HEK293T (cell line): ENCODE measurements at regions of chr17 and their contacts with region 1.

Region 1: DNA sequence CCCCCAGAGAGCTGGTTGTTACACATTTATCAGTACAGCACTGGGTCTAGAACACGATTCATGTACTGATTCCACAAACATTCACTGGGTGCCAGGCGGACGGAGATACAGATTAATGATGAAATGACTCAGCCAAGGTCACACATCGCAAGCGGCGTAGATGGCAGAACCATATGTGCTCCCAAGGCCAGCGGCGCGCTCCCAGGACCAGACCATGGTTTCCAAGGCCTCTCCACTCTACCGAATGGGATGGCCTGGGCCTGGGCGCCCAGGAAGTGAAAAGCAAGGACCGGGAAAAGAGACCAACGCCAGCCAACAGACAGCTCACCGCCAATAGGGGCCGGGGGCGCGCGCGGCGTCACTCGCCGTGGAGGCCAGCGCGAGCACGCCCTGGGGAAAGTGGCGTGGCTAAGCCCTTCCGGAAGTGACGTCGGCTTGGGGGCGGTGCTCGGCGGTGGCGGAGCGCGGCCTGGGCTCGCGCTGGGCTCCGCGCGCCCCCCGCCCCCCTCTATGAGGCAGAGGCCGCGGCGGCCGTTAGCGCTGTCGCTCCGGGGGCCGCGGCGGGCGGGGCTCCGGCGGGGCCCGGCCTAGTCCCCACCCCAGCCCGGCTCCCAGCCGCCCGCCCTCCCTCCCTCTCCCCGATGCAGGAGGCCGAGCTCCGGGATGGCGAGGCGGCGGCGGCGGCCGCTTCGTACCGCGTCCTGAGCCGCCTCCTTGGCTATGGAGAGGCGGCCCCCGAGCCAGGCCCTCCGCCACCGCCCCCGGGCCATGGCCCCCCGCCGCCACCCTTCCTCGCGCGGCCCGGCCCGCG is at the start of gene SOCS7:
- DNase-seq: peak; percentile 86

Region 2: GRCh38 chr17:38322091-38322779 is 29.4 kb before region 1 on chr17:
- CTCF ChIA-PET with region 1: interaction called, 11 read pairs
- POLR2A ChIA-PET with region 1: interaction called, 6 read pairs
- DNase-seq: peak; percentile 68

Region 3: DNA sequence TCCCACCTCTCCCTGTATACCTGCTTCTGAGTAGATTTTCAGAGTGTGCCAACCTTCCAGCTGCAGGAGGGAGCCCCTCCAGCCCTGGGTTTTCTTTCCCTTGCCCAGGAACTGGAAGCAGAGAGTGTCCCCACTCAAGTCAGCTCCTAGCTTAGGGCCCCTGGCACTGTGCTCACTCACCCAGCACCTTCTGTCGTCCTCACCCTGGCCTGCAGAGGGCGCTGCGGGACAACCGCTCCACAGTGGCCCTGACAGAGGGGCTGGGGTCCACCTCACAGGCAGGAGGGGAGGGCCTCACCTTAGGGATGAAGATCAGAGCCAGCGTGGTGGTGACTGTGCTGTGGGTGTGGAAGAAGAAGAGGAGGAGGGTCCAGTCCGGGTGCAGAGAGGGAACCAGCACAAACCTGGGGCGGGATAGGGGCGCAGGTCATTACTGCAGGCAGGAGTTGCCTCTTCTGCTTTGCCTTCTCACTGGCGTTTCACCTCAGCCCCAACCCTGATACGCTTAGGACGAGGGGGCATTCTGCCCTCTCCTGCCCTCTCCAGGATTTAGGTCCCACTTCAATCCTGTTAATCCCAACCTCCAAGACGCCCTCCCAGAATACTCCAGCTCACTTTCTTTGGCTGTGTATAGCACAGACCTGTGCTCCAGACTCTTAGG is 17.9 kb before region 1 on chr17:
- CTCF ChIA-PET with region 1: interaction called, 42 read pairs
- POLR2A ChIA-PET with region 1: interaction called, 15 read pairs
- DNase-seq: peak; percentile 71

Region 4: GRCh38 chr17:38341035-38341721 is 10.4 kb before region 1 on chr17:
- CTCF ChIA-PET with region 1: interaction called, 42 read pairs
- POLR2A ChIA-PET with region 1: interaction called, 11 read pairs
- DNase-seq: peak; percentile 28

Region 5: GRCh38 chr17:38361694-38362465 is 10.3 kb after region 1 on chr17:
- CTCF ChIA-PET with region 1: interaction called, 13 read pairs
- POLR2A ChIA-PET with region 1: interaction called, 11 read pairs
- DNase-seq: no peak

Region 6: GRCh38 chr17:38379438-38379837 is 27.8 kb after region 1 on chr17:
- CTCF ChIA-PET with region 1: interaction called, 15 read pairs
- POLR2A ChIA-PET with region 1: interaction called, 8 read pairs
- DNase-seq: no peak

Region 7: DNA sequence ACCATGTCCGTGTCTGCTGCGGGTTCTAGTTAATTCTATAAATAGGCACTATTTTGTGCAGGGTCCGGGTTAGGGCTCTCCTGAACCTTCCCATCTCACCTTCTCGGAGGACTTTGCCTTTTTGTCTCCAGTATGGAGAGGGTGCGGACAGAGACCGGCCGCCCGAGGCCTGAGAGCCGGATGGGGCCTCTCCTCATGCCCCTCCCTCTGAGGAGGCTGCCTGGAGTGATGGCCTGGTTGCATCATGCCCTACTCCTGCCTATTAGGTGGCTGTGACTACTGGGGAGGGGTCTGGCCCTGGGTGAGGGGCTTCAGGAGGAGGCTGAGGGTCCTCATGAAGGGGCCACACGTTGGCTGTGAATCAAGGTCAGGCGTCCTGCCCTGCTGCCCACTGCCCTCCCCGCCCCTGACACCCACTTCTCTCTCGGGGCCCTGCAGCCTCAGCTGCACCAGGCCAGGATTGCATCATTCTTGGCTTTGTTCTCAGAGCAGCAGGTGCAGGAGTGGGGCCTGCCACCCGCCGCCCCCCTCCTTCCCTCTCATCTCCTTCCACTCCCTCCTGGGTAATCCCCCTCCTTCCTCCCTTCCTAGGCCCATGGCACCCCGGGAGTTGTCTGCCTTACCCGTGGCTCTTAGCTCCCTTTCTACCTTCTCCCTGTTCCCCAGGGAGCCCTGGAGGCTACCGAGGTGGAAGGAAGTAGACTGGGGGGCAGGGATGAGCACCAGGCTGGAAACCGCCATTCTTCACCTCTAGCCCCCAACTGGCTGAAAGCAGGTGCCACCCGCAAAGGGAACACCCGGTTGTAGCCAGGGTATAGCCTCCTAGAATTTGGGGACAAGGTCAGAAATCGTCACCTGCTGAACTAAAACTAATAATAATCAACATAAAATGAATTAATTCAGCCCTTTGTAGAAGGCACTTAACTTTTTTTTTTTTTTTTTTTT is 63.9 kb after region 1 on chr17:
- CTCF ChIA-PET with region 1: interaction called, 53 read pairs
- POLR2A ChIA-PET with region 1: interaction called, 69 read pairs
- DNase-seq: peak; percentile 32

Region 8: DNA sequence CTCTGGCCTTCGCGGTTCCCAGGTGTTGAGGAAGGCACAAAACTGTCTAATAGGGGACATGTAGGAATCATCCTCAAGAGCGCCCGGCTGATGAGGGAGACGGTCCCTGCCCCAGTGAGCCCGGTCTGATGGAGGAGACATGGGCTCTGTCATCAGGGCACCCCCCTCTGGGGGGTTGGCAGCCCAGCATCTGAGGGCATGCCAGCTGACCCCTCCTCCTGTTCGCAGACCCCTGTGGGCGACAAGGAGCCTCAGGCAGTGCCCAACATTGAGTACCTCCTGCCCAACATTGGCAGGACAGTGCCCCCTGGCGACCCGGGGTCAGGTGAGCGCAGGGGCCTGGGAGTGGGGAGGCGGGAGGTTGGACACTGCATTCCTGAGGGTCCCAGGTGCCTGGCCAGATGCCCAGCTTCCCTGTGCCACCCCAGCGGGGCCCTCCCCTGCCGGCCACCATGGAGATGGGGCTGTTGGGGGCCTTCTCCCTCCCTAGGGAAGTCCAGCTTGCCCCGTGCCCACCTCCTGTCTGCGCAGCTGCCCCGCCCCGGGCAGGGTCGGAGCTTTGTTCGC is 146.7 kb after region 1 on chr17:
- CTCF ChIA-PET with region 1: no interaction called
- POLR2A ChIA-PET with region 1: no interaction called
- DNase-seq: no peak

Region 9: GRCh38 chr17:38605888-38606645 is 254.4 kb after region 1 on chr17 and contains the start of gene SRCIN1:
- CTCF ChIA-PET with region 1: no interaction called
- POLR2A ChIA-PET with region 1: no interaction called
- DNase-seq: peak; percentile 74